ENCODE measurements at regions of chrX and their contacts with region 1.

Region 1: DNA sequence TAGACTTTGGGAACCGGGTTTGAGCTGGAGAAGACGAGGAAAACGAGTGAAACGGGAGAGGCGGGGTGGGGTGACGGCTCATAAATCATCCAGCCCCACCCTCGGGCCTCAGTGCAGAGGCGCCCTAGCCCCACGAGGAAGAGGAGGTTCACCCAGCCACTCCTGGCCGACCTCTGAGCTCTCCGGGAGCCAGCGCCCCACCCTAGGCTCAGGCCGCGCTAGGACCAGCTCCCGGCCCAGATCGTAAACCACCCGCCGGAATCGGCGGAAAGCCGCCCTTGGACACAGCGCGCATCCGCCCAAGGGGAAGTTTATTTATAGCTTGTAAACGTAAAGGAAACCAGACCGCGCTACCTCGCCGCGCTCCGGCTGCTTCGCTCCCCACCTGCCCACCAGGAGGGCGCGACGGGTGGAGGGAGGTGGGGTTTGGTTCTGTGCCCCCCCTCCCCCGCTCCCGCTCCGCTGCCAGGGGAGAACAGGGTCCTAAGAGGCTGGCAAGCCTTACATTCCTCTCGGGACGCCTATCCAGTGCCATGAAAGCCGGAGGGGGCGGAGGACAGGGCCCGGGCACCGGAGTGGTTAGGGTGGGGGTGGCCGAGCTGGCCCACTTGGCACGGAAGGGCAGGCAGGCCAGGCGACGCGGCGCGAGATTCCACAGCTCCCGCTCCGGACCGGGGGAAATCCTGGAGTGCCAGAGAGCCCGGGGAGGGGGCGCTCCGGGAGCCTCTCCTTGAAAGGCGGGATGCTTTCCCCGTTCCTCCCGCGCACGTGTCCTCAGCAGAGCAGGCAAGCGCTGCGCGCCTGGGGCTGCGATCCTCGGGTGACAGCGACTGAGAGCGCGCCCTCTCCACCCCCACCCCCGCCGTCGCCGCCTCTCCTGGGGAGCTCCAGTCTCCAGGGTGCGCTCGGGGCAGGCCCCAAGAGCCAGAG is 84.2 kb downstream of the BCOR start:
- DNase-seq: peak; percentile 80
- ATAC-seq: peak; percentile 55
- H3K4me3 ChIP-seq: peak overlapping the region in 4 of 5 experiments; percentile 53 to 69 (median 56)
- H3K4me3 Mint-ChIP-seq: peak overlapping the region; percentile 85
- H3K27ac ChIP-seq: peak overlapping the region in 1 of 2 donors; percentile 36
- H3K27ac Mint-ChIP-seq: peak overlapping the region; percentile 71
- H3K4me1 ChIP-seq: peaks cover 43 to 52% of the 10 kb centered on the region in 2 donors
- H3K4me1 Mint-ChIP-seq: peaks cover 34% of the 10 kb centered on the region
- H3K27me3 ChIP-seq: peaks cover 0 to 10% (median under 1%) of the 10 kb centered on the region in 4 experiments
- H3K27me3 Mint-ChIP-seq: peaks cover 2% of the 10 kb centered on the region
- CTCF ChIP-seq: no peak

Region 2: DNA sequence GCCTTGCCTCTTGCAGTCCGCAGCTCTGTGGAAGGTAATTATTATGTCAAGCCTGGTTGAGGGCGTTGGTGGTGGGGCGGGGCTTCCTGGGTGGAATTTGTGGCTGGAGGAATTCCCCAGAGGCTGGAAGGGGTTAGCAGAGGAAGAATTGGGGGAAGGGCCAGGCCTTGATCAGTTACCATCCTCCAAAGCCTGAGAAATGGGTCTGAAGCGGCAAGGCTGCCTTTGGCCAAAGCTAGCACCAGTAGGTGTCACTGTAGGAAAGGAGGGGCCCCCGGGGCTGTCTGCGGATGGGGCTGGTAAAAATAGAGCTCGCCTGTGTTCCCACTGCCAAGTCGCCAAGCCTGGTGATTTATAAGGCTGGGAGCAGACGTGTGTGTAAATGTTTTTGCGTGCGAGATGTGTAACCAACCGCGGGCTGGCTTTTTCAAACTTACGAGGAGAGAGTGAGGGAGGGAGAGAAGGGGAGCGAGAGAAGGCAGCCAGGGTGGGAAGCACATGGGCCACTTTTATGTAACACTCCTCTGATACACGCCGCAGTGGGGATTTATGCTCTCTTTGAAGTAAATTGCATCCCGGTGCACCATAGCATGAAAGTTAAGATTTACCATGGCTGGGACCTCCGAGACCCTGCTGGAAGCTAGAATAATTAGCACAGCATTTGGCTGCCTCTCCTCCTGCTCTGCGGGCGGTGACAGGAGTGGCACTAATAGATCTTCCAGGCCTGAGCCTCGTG is 282.7 kb before region 1 on chrX:
- CTCF ChIA-PET with region 1: no interaction called
- POLR2A ChIA-PET with region 1: no interaction called
- intact Hi-C with region 1: loop called (anchors 5 kb)
- DNase-seq: peak; percentile 57
- ATAC-seq: peak; percentile 60
- H3K4me3 ChIP-seq: no peak overlapping the region
- H3K4me3 Mint-ChIP-seq: peak overlapping the region; percentile 35
- H3K27ac ChIP-seq: no peak overlapping the region
- H3K27ac Mint-ChIP-seq: no peak overlapping the region
- H3K4me1 ChIP-seq: peaks cover 6 to 8% of the 10 kb centered on the region in 2 donors
- H3K4me1 Mint-ChIP-seq: peaks cover 4% of the 10 kb centered on the region
- H3K27me3 ChIP-seq: peaks cover 0 to 12% (median 2%) of the 10 kb centered on the region in 4 experiments
- H3K27me3 Mint-ChIP-seq: peaks cover 5% of the 10 kb centered on the region
- CTCF ChIP-seq: peak; percentile 43

Region 3: GRCh38 chrX:39820938-39821708 is 192.4 kb before region 1 on chrX:
- CTCF ChIA-PET with region 1: no interaction called
- POLR2A ChIA-PET with region 1: no interaction called
- intact Hi-C with region 1: loop called (anchors 5 kb)
- DNase-seq: no peak
- ATAC-seq: no peak
- H3K4me3 ChIP-seq: no peak overlapping the region
- H3K4me3 Mint-ChIP-seq: peak overlapping the region; percentile 41
- H3K27ac ChIP-seq: no peak overlapping the region
- H3K27ac Mint-ChIP-seq: no peak overlapping the region
- H3K4me1 ChIP-seq: peaks cover 7 to 9% of the 10 kb centered on the region in 2 donors
- H3K4me1 Mint-ChIP-seq: peaks cover 15% of the 10 kb centered on the region
- H3K27me3 ChIP-seq: peaks cover 0 to 48% (median 12%) of the 10 kb centered on the region in 4 experiments
- H3K27me3 Mint-ChIP-seq: peaks cover 45% of the 10 kb centered on the region
- CTCF ChIP-seq: no peak

Region 4: DNA sequence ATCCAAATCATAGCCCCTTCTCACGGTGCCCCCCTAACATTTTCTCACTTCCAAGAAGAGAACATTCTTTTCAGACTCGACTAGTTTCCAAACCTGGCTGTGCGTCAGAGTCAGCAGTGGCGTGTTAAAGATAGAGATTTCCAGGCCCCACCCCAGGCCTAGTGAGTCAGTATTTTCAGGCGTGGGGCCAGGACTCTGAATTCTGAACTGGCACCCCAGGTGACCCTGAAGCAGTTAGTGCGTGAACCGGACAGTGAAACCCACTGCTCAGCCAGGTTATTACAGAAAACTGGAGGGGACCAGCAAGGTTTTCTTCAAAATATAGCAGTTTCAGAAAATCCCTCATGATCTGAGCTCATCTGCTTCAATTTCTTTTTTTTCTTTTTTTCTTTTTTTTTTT is 119.2 kb after region 1 on chrX:
- CTCF ChIA-PET with region 1: no interaction called
- POLR2A ChIA-PET with region 1: no interaction called
- intact Hi-C with region 1: no loop called
- DNase-seq: no peak
- ATAC-seq: no peak
- H3K4me3 ChIP-seq: no peak overlapping the region
- H3K4me3 Mint-ChIP-seq: no peak overlapping the region
- H3K27ac ChIP-seq: no peak overlapping the region
- H3K27ac Mint-ChIP-seq: no peak overlapping the region
- H3K4me1 ChIP-seq: no peaks in the 10 kb centered on the region
- H3K4me1 Mint-ChIP-seq: peaks cover 7% of the 10 kb centered on the region
- H3K27me3 ChIP-seq: no peaks in the 10 kb centered on the region
- H3K27me3 Mint-ChIP-seq: no peaks in the 10 kb centered on the region
- CTCF ChIP-seq: no peak

Region 5: DNA sequence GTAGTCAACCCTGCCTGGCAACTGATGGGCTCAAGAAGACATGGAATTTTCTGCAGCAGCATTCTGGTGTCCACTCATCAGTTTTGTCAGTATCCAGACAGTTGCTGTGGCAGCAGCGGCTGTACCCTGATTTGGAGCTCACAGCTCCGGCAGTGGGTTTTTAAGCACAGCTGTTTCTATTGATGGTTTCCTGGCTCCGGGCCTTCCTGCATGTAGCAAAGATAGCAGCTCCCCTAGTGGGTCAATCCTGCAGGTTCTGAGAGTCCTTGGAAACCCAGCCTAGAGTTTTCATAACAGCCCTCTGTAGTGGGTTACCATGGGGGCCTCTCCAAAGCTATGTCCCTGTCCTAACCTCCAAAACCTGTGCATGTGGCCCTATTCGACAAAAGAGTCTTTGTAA is 483.2 kb after region 1 on chrX:
- CTCF ChIA-PET with region 1: no interaction called
- POLR2A ChIA-PET with region 1: no interaction called
- intact Hi-C with region 1: no loop called
- DNase-seq: no peak
- ATAC-seq: no peak
- H3K4me3 ChIP-seq: no peak overlapping the region
- H3K4me3 Mint-ChIP-seq: no peak overlapping the region
- H3K27ac ChIP-seq: no peak overlapping the region
- H3K27ac Mint-ChIP-seq: no peak overlapping the region
- H3K4me1 ChIP-seq: no peaks in the 10 kb centered on the region
- H3K4me1 Mint-ChIP-seq: no peaks in the 10 kb centered on the region
- H3K27me3 ChIP-seq: no peaks in the 10 kb centered on the region
- H3K27me3 Mint-ChIP-seq: peaks cover 7% of the 10 kb centered on the region
- CTCF ChIP-seq: no peak

Measured in B cell (primary cell).